ENCODE measurements at regions of chr9 and their contacts with region 1.

Region 1: GRCh38 chr9:123929870-123930831 is at the start of gene DENND1A:
- DNase-seq: peak; percentile 92
- H3K4me3 ChIP-seq: peak within 1 kb of the TSS; percentile 50 to 87 (median 87)
- H3K27ac ChIP-seq: no peak within 1 kb of the TSS
- H3K4me1 ChIP-seq: peaks cover 13% of the 10 kb centered on the region
- H3K27me3 ChIP-seq: no peaks in the 10 kb centered on the region
- CTCF ChIP-seq: no peak
- POLR2A ChIP-seq: no peak
- total RNA-seq, gene DENND1A: 15.7 and 18.5 TPM in 2 replicates

Region 2: DNA sequence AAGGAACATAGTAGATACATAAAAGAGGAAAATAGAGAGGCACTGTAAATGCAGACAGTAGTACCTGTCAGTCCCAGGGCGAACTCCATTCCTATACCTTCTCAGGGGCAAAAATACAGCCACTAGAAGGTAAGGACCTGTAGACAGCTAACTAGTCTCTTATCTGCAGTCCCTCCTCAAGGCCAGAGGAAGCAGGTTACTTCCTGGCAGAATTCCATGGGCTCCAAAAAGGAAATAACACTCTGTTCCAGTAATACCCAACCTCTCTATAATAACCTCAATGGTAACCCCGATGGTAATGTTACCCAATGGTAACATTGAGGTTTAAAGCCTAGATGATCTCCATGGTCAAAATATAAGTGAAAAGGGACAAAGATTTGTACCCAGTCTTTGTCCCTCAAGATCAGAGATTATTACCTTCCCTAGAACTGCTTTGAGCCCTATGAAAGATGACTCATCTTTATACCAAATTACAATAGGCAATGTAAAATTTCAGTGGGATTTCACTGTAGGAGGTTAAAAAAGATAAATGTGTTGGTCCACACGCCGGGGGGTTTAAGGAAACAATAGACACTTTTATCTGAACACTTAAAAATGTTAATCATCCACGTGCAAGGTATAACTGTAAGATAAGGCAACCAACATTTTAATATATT is 113.2 kb before region 1 on chr9:
- CTCF ChIA-PET with region 1: no interaction called
- POLR2A ChIA-PET with region 1: no interaction called
- dilution Hi-C with region 1: no loop called
- intact Hi-C with region 1: loop called (anchors 2 kb)
- DNase-seq: peak; percentile 89
- H3K4me3 ChIP-seq: no peak overlapping the region
- H3K27ac ChIP-seq: peak overlapping the region; percentile 29
- H3K4me1 ChIP-seq: peaks cover 36% of the 10 kb centered on the region
- H3K27me3 ChIP-seq: no peaks in the 10 kb centered on the region
- CTCF ChIP-seq: no peak
- POLR2A ChIP-seq: no peak

Region 3: DNA sequence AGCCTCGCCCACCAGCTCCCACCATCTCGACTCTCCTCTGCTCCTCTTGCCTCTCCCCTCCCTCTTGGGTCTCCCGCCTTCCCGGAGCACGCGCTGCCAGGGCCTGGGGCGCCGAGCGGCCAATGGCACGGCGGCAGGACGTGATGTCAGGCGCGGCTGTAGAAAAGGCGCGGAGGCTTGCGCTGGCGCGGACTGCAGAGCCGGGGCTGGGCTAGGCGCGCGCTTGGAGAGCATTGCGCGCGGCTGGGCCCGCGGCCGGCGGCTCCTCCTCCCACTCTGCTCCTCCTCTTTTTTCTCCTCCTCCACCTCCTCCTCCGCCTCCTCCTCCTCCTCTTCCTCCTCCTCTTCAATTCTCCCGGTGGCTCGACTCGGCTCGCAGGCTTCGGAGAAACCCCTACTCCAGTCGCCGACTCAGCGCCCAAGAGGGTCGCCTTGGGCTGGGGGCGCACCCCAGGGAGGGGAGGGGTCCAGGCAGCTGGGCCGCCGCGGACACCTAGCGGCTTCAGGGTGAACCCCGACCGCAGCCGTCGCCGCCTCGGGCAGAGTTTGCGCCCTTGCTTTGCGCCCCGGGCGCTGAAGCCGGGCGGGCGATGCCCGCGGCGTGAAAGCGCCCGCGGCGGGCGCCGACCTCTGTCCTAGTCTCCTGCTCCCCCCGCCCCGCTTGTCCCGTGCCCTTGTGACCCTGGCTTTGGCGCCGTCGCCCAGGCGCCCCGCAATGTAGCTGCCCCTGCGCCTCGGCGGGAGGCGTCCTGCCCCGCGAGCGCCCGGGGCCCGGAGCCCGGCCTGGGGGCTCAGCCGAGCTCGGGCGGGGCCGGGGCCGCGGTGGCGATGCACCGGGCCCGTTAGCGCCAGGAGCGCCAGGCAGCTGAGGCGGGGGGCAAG is 81.5 kb after region 1 on chr9 and contains the start of gene LHX2:
- CTCF ChIA-PET with region 1: no interaction called
- POLR2A ChIA-PET with region 1: no interaction called
- dilution Hi-C with region 1: no loop called
- intact Hi-C with region 1: loop called (anchors 5 kb)
- DNase-seq: peak; percentile 46
- H3K4me3 ChIP-seq: peak within 1 kb of the TSS in 1 of 3 experiments; percentile 8
- H3K27ac ChIP-seq: no peak within 1 kb of the TSS
- H3K4me1 ChIP-seq: peaks cover 3% of the 10 kb centered on the region
- H3K27me3 ChIP-seq: peaks cover 91 to 97% of the 10 kb centered on the region in 2 experiments
- CTCF ChIP-seq: peak in 1 of 2 donors; percentile 9
- POLR2A ChIP-seq: no peak
- total RNA-seq, gene LHX2: not detected in 2 replicates

Region 4: GRCh38 chr9:124126571-124127289 is 196.6 kb after region 1 on chr9:
- CTCF ChIA-PET with region 1: no interaction called
- POLR2A ChIA-PET with region 1: no interaction called
- dilution Hi-C with region 1: no loop called
- intact Hi-C with region 1: no loop called
- DNase-seq: peak; percentile 67
- H3K4me3 ChIP-seq: no peak overlapping the region
- H3K27ac ChIP-seq: no peak overlapping the region
- H3K4me1 ChIP-seq: no peaks in the 10 kb centered on the region
- H3K27me3 ChIP-seq: no peaks in the 10 kb centered on the region
- CTCF ChIP-seq: peak; percentile 90 to 96
- POLR2A ChIP-seq: no peak

Measured in endothelial cell of umbilical vein (primary cell).